Activated CD4-positive, alpha-beta T cell treated with anti-CD3 and anti-CD28 coated beads, Interleukin-2, amount 10 ng/mL, durations not matched to agents 7 days and 5 days (primary cell): ENCODE measurements at regions of chr3 and their contacts with region 1.

Region 1: GRCh38 chr3:150721285-150722130 is 17.8 kb upstream of the ERICH6 start:
- DNase-seq: peak; percentile 42
- H3K4me3 Mint-ChIP-seq: no peak overlapping the region
- H3K27ac Mint-ChIP-seq: no peak overlapping the region
- H3K4me1 Mint-ChIP-seq: peaks cover 29% of the 10 kb centered on the region
- H3K27me3 Mint-ChIP-seq: no peaks in the 10 kb centered on the region

Region 2: DNA sequence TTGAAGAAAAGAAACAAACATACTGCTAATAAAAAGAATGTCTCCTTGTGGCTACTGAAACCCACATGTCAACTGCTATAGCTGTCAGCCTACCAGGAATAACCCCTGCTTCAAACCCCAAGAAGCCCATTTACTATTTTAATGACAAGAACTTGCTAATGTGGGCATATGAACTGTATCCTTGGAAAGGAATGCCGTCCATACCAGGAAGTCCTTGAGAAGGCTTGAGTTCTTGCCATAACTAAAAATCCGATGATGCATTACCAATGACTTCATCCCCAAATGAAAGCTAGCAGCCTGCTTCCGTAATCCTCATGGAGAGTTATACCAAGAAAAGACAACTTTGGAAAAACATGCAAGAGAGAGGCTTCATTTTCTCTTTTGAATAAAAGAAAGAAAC is 148.9 kb after region 1 on chr3:
- CTCF ChIA-PET with region 1: interaction called, 10 read pairs
- POLR2A ChIA-PET with region 1: no interaction called
- DNase-seq: no peak
- H3K4me3 Mint-ChIP-seq: no peak overlapping the region
- H3K27ac Mint-ChIP-seq: no peak overlapping the region
- H3K4me1 Mint-ChIP-seq: peaks cover under 1% of the 10 kb centered on the region
- H3K27me3 Mint-ChIP-seq: peaks cover 6% of the 10 kb centered on the region